ENCODE measurements at regions of chr11 and their contacts with region 1.

Region 1: DNA sequence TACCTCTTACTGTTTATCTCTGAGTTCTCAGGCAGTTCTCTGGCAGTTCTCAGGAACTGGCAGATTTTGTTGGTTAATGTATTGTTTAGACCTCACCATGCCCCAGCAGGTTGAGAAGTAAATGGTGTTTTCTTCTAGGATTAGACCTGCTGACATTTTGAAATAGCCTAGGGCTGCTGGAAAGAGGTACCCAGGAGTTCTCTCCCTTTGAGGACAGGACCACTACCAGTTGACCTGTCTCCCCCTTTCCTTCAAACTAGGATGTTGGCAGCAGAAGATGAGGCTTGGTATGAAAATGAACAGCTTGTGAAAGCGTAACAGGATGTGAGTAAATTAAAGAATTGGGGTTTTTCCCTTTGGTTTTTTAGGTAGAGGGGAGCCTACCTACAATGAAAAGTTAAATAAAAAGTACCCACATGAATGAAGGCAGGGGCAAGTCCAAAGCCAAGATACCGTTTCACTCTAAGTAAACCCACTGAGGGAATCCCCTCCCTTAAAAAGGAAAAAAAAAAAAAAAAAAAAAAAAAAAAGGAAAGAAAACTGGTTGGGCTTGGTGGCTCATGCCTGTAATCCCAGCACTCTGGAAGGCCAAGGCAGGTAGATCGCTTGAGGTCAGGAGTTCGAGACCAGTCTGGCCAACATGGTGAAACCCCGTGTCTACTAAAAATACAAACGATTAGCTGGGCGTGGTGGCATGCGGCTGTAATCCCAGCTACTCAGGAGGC is 96.2 kb downstream of the PDHX start:
- DNase-seq: no peak
- H3K4me3 ChIP-seq: no peak overlapping the region
- H3K27ac ChIP-seq: no peak overlapping the region
- H3K4me1 ChIP-seq: no peaks in the 10 kb centered on the region
- H3K27me3 ChIP-seq: no peaks in the 10 kb centered on the region
- CTCF ChIP-seq: no peak
- POLR2A ChIP-seq: no peak

Region 2: GRCh38 chr11:34988294-34989255 is 24.1 kb before region 1 on chr11:
- CTCF ChIA-PET with region 1: no interaction called
- POLR2A ChIA-PET with region 1: interaction called, 13 read pairs
- dilution Hi-C with region 1: no loop called
- intact Hi-C with region 1: no loop called
- DNase-seq: no peak
- H3K4me3 ChIP-seq: no peak overlapping the region
- H3K27ac ChIP-seq: no peak overlapping the region
- H3K4me1 ChIP-seq: no peaks in the 10 kb centered on the region
- H3K27me3 ChIP-seq: no peaks in the 10 kb centered on the region
- CTCF ChIP-seq: no peak
- POLR2A ChIP-seq: no peak

Region 3: DNA sequence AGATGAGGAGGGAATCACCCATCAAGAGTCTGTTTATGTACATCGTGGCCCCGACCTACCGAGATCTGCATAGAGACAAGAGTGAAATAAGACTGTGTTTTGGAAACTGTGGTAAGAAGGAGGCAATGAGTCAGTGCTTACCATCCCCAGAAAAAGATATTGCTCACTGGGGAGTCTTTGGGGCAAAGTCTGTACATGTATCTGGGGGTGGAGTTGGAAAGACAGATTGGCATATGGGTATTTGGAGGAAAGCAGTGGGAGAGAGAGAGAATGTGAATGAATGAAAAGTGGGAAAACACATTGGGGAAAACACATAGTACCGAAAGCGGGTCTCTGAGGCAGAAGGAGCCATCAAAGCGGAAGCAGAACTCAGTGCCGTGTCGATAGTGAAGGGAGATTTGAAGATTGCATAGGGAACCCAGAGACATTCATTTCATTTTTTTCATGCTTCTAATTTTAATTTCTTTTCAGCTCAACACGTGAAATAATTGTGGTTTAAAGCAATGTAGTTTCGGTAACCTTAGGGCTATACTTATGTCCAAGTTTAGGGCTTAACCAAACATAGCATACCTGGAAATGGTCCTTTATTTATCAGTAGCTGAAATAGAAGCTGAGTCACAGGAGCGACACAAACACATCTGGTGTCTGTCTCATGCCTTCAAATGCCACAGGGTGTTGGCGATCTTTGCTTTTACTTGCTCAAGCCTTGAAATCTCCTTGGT is 27.8 kb after region 1 on chr11:
- CTCF ChIA-PET with region 1: no interaction called
- POLR2A ChIA-PET with region 1: no interaction called
- dilution Hi-C with region 1: no loop called
- intact Hi-C with region 1: no loop called
- DNase-seq: no peak
- H3K4me3 ChIP-seq: no peak overlapping the region
- H3K27ac ChIP-seq: no peak overlapping the region
- H3K4me1 ChIP-seq: peaks cover 14% of the 10 kb centered on the region
- H3K27me3 ChIP-seq: peaks cover 0 to 7% of the 10 kb centered on the region in 2 experiments
- CTCF ChIP-seq: no peak
- POLR2A ChIP-seq: no peak